ENCODE measurements at regions of chr3 and their contacts with region 1.

Region 1: GRCh38 chr3:113589971-113590370 is 57.6 kb downstream of the SIDT1 start:
- DNase-seq: no peak
- H3K4me3 Mint-ChIP-seq: no peak overlapping the region
- H3K27ac Mint-ChIP-seq: no peak overlapping the region
- H3K4me1 Mint-ChIP-seq: no peaks in the 10 kb centered on the region
- H3K27me3 Mint-ChIP-seq: peaks cover 6% of the 10 kb centered on the region
- CTCF ChIP-seq: no peak

Region 2: DNA sequence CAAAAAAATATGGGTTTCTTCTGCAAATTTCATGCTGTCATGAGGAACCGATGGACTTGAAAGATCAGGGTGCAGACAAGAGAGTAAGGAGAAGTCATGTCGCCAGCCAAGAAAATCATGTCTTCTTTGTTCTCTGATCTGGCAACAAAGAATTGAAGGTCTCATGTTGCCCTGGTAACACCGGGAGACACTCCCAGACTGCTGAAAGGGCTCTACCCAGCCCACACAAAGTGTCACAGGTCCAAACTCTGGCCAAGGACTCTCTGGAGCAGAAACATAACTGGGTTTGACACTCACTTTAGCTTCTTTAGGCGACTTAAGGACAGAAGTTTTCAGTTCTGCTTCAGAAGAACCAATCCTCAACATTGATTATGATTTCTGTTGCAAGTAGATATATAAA is 14.8 kb before region 1 on chr3:
- CTCF ChIA-PET with region 1: interaction called, 21 read pairs
- POLR2A ChIA-PET with region 1: interaction called, 3 read pairs
- intact Hi-C with region 1: no loop called
- DNase-seq: no peak
- H3K4me3 Mint-ChIP-seq: no peak overlapping the region
- H3K27ac Mint-ChIP-seq: no peak overlapping the region
- H3K4me1 Mint-ChIP-seq: no peaks in the 10 kb centered on the region
- H3K27me3 Mint-ChIP-seq: peaks cover 27% of the 10 kb centered on the region
- CTCF ChIP-seq: no peak